Activated CD4-positive, alpha-beta memory T cell treated with anti-CD3 and anti-CD28 coated beads for 36 hours (primary cell): ENCODE measurements at regions of chr4 and their contacts with region 1.

Region 1: GRCh38 chr4:152535903-152536544 is at the start of gene FBXW7:
- DNase-seq: peak; percentile 100
- H3K4me3 Mint-ChIP-seq: peak within 1 kb of the TSS; percentile 95
- H3K27ac Mint-ChIP-seq: peak within 1 kb of the TSS; percentile 99
- H3K4me1 Mint-ChIP-seq: peaks cover 57% of the 10 kb centered on the region
- H3K27me3 Mint-ChIP-seq: no peaks in the 10 kb centered on the region
- total RNA-seq, gene FBXW7: 35.8 to 37.8 TPM

Region 2: DNA sequence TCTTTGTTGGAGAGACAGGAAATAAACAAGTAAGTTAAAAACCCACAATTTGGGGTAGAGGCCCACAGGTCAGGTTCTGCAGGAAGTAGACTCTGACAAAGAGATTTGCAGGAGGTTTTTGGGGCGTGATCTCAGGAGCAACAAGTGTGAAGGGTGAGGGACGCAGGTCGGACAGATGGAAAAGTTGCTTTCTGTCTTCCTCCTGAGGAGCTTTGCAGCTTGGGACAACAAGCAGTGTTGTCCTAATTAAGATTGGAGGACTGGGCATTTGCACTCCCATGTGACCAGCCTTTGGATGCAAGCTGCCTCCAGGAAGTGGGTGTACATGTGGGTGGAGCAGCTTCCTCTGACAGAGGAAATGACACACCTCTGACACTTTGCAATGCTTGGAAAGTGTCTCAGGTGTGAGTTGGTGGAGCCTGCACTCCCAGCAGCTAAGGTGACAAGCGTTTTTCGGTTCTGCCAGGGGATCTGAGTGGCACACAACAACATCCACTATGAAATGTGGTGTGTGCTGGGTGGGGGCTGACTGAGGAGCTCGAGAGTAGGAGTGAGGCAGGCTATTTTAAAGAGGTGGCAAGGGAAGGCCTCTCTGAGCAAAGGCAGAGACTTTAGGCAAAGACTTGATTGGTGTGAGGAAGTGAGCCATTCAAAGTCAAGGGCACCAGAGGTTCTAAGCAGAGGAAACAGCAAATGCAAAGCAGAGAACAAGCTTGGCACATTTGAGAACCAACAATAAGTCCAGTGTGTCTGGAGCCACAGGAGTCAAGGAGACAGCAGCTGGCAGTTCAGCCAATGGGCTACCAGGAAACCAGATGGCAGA is 435.4 kb before region 1 on chr4:
- CTCF ChIA-PET with region 1: no interaction called
- POLR2A ChIA-PET with region 1: interaction called, 3 read pairs
- intact Hi-C with region 1: loop called (anchors 2 kb)
- DNase-seq: peak; percentile 89
- H3K4me3 Mint-ChIP-seq: peak overlapping the region; percentile 72
- H3K27ac Mint-ChIP-seq: peak overlapping the region; percentile 97
- H3K4me1 Mint-ChIP-seq: peaks cover 88% of the 10 kb centered on the region
- H3K27me3 Mint-ChIP-seq: no peaks in the 10 kb centered on the region

Region 3: GRCh38 chr4:152348670-152349069 is 187.4 kb before region 1 on chr4:
- CTCF ChIA-PET with region 1: no interaction called
- POLR2A ChIA-PET with region 1: no interaction called
- intact Hi-C with region 1: no loop called
- DNase-seq: no peak
- H3K4me3 Mint-ChIP-seq: no peak overlapping the region
- H3K27ac Mint-ChIP-seq: no peak overlapping the region
- H3K4me1 Mint-ChIP-seq: peaks cover 11% of the 10 kb centered on the region
- H3K27me3 Mint-ChIP-seq: no peaks in the 10 kb centered on the region

Region 4: DNA sequence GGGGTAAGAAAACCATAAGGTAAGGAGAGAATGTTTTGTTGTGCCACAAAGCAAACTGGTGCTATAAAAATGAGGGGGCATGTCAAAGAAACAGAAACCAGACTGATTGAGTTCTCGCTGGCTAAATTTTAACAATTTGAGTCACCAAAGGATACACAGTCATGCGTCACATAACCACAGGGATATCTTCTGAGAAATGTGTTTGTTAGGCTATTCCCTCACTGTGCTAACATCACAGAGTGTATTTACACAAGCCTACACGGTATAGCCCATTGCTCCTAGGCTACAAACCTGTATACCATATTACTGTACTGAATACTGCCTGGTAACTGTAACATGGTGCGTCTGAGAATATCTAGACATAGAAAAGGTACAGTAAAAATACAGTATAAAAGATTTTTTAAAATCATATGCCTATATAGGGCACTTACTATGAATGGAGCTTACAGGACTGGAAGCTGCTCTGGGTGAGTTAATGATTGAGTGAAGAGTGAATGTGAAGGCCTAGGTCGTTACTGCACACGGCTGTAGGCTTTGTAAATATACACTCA is 50.2 kb before region 1 on chr4:
- CTCF ChIA-PET with region 1: interaction called, 3 read pairs
- POLR2A ChIA-PET with region 1: interaction called, 3 read pairs
- intact Hi-C with region 1: loop called (anchors 1 kb)
- DNase-seq: no peak
- H3K4me3 Mint-ChIP-seq: peak overlapping the region; percentile 23
- H3K27ac Mint-ChIP-seq: no peak overlapping the region
- H3K4me1 Mint-ChIP-seq: peaks cover 39% of the 10 kb centered on the region
- H3K27me3 Mint-ChIP-seq: no peaks in the 10 kb centered on the region

Region 5: DNA sequence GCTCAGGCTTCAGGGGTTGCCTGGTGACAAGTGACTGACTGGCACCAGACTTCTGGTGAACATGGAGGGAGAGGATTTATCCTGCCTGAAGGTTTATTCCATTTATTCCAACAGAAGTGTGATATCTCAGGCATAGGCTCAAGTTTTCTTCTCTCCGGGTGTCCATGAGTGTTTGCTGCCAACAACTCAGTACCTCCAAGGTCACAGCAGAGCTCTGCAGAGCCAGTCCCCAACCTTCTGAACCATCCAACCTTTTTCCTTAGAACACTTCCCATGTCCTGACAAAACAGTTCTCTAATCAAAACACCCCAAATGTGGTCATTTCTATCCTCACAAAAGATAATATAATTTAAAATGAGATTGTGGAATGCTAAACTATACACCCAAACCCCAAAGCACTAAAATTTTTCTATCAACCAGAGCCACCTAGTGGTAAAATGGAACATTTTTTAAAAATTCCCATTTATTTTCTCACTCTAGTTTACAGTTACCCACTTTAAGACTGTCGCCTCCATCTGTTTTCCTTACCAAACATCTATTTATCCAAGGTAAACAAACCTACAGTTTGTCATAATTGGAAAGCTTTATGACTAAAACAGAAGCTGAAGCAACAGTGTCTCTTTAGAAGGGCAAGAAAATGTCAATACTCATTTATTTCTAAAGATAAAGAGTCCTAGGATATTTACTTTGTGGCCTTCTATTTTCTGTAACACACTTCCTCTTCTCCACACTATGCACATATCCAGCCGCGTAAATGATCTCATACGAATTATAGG is 104.2 kb after region 1 on chr4:
- CTCF ChIA-PET with region 1: interaction called, 8 read pairs
- POLR2A ChIA-PET with region 1: interaction called, 3 read pairs
- intact Hi-C with region 1: loop called (anchors 1 kb)
- DNase-seq: no peak
- H3K4me3 Mint-ChIP-seq: no peak overlapping the region
- H3K27ac Mint-ChIP-seq: no peak overlapping the region
- H3K4me1 Mint-ChIP-seq: peaks cover 42% of the 10 kb centered on the region
- H3K27me3 Mint-ChIP-seq: no peaks in the 10 kb centered on the region

Region 6: DNA sequence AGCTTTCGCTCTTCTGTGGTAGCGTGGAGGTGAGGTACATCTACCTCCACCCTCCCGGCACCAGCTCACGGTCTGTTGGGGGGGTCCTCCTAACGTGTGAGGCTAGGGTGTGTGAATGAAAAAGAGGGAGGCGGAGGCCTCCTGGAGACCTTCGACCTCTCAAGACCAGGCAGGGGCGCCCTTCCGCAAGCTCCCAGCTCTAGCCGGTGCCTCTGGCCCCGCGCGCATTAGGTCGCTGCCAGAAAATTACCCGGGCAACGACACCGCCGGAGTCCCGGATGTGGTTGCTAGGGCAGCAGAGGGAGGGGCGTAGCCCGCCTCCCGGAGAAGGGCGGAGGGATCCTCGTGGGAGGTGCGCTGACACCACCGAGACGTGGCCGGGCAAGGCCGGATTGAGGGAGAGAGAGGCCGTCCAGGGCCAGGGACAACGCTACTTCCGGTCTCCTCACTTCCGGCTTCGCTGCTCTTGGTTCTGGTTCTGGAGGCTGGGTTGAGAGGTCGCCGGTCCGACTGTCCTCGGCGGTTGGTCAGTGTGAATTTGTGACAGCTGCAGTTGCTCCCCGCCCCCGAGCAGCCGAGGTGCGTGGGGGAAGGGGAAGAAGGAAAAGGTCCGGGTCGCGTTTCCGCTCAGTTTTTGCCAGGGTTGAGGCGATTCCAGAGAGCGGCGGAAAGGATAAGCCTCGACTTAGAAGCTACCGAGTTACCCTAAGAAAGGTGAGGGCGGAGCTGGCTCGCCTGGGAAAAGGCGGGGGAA is 243.7 kb after region 1 on chr4 and contains the starts of genes ARFIP1 and TIGD4:
- CTCF ChIA-PET with region 1: interaction called, 5 read pairs
- POLR2A ChIA-PET with region 1: interaction called, 4 read pairs
- intact Hi-C with region 1: loop called (anchors 5 kb)
- DNase-seq: peak; percentile 98
- H3K4me3 Mint-ChIP-seq: peak within 1 kb of the TSS; percentile 95
- H3K27ac Mint-ChIP-seq: peak within 1 kb of the TSS; percentile 85
- H3K4me1 Mint-ChIP-seq: peaks cover 34% of the 10 kb centered on the region
- H3K27me3 Mint-ChIP-seq: peaks cover 3% of the 10 kb centered on the region
- total RNA-seq, gene ARFIP1: 9.3 to 10.5 TPM
- total RNA-seq, gene TIGD4: 0.15 to 0.31 TPM

Region 7: DNA sequence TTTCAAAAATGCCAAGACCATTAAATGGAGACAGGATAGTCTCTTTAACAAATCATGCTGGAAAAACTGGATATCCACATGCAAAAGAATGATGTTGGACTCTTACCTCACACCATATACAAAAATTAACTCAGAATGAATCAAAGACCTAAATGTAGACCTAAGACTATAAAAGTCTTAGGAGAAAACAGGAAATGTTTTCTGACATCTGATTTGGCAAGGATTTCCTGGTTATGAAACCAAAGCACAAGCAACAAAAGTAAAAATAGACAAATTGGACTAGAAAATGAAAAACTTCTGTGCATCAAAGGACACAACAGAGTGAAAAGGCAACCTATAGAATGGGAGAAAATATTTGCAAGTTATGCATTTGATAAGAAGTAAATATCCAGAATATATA is 281.3 kb after region 1 on chr4:
- CTCF ChIA-PET with region 1: no interaction called
- POLR2A ChIA-PET with region 1: no interaction called
- intact Hi-C with region 1: no loop called
- DNase-seq: no peak
- H3K4me3 Mint-ChIP-seq: no peak overlapping the region
- H3K27ac Mint-ChIP-seq: no peak overlapping the region
- H3K4me1 Mint-ChIP-seq: peaks cover 10% of the 10 kb centered on the region
- H3K27me3 Mint-ChIP-seq: no peaks in the 10 kb centered on the region

Region 8: DNA sequence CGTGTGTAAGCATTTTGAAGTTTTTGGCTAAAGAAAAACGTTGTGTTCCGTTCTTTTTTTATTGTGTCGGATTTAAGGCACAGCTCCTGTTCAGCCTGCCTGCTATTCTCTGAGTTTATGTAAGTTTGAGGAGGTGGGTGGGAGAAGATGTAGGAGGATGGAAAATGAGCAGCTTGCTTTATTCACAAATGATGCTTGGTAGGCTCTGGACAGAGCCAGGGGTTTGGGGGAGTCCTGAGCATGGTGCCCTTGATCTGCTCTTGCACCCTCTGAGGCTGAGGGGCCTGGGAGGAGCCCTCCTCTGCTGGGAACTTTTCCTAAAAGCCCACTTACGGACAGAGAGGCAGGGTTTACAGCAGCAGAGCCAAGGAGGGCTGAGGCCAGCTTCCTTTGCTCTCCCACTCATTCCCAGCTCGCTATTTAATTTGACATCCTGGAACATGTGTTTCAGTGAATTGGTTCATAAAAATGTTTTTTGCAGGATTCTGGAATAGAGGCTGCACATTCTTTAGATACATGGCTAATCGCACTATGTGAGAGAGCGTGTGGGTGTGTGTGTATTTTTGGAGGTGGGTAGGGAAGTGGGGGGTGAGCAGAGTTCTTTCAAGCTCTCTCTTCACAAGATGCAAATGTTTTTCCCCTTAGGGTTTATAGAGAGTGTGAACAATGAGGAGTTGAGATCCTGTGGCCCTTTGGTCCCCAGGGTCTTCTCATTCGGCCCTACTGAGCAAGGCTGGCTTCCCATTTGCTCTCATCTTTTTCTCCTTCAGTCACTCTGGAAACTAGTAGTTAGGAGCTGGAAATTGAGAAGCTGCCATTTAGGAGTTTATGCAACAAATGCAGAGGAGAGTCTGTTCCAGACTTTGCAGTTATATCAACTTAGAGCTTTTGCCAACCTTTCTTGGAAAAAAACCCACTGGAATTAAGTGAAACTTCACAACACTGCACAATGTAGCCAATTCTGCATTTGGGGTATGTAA is 962.3 kb after region 1 on chr4:
- CTCF ChIA-PET with region 1: no interaction called
- POLR2A ChIA-PET with region 1: no interaction called
- intact Hi-C with region 1: loop called (anchors 10 kb)
- DNase-seq: no peak
- H3K4me3 Mint-ChIP-seq: peak overlapping the region; percentile 67
- H3K27ac Mint-ChIP-seq: peak overlapping the region; percentile 98
- H3K4me1 Mint-ChIP-seq: peaks cover 94% of the 10 kb centered on the region
- H3K27me3 Mint-ChIP-seq: no peaks in the 10 kb centered on the region